ENCODE measurements at regions of chr19 and their contacts with region 1.

Region 1: DNA sequence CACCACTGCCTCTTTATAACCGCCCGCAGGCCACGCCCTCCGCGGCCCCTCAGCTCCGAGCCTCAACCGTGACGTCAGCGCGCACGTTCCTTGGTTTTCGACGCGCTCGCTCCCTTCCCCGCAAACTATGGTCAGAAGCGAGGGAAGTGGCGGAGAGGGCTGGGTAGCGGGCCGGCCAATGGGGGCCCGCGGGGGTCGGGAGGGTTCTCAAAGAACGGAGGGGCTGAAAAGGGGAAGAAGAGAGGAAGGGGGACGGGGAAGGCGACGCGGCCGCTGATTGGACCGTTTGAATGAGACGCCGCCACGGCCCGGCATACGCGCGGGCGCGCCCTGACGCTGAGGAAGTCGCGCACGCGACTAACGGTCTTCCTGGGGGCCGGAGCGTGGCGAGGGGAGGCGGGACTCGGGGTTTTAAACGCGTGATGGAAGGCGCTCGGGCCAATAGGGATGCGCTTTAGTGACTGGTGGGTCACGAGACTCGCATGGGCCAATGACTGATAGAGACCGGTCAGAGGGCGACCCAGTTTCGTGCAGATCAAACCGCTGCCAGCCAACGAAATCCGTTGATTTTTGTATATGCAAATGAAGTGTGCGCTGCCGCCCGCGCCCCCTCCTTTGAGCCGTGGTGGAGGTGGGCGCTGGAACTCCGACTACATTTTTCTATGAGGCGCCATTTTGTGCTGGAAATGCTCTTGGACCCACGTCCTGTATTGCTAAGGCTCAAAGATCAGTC is 378 bp upstream of the UBE2S start:
- DNase-seq: peak; percentile 96
- H3K4me3 Mint-ChIP-seq: peak overlapping the region; percentile 93
- H3K27ac Mint-ChIP-seq: peak overlapping the region; percentile 97
- H3K4me1 Mint-ChIP-seq: peaks cover 26% of the 10 kb centered on the region
- H3K27me3 Mint-ChIP-seq: peaks cover 6% of the 10 kb centered on the region

Region 2: DNA sequence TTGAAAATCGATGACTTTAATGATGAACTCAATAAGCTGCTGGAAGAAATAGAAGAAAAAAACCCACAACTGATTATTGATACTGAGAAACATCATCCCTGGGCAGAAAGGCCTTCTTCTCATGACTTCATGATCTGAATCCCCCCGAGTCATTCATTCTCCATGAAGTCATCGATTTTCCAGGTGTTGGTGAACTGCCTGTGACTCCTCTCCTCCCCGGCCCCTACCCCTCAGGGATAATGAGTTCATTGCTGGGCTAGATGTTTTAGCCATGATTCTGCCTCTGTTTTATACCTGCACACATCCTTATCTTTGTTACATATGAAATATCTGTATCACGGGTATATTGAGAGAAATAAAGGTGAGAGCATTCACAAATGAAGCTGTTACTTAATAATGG is 407.2 kb before region 1 on chr19:
- intact Hi-C with region 1: no loop called
- DNase-seq: no peak
- H3K4me3 Mint-ChIP-seq: no peak overlapping the region
- H3K27ac Mint-ChIP-seq: no peak overlapping the region
- H3K4me1 Mint-ChIP-seq: peaks cover 2% of the 10 kb centered on the region
- H3K27me3 Mint-ChIP-seq: no peaks in the 10 kb centered on the region

Region 3: GRCh38 chr19:55062734-55063492 is 345.1 kb before region 1 on chr19 and contains the start of gene RDH13:
- intact Hi-C with region 1: loop called (anchors 1 kb)
- DNase-seq: peak; percentile 96
- H3K4me3 Mint-ChIP-seq: peak within 1 kb of the TSS; percentile 89
- H3K27ac Mint-ChIP-seq: peak within 1 kb of the TSS; percentile 75
- H3K4me1 Mint-ChIP-seq: peaks cover 12% of the 10 kb centered on the region
- H3K27me3 Mint-ChIP-seq: peaks cover 18% of the 10 kb centered on the region
- total RNA-seq, gene RDH13: 21.7 and 26.4 TPM in 2 replicates

Region 4: GRCh38 chr19:55279770-55280643 is 128.0 kb before region 1 on chr19 and contains the start of gene HSPBP1:
- intact Hi-C with region 1: loop called (anchors 1 kb)
- DNase-seq: peak; percentile 95
- H3K4me3 Mint-ChIP-seq: peak within 1 kb of the TSS; percentile 99
- H3K27ac Mint-ChIP-seq: peak within 1 kb of the TSS; percentile 96
- H3K4me1 Mint-ChIP-seq: peaks cover 51% of the 10 kb centered on the region
- H3K27me3 Mint-ChIP-seq: peaks cover 7% of the 10 kb centered on the region
- total RNA-seq, gene HSPBP1: 66.4 and 69.6 TPM in 2 replicates

Region 5: GRCh38 chr19:55385740-55386529 is 22.0 kb before region 1 on chr19 and contains the start of gene RPL28:
- intact Hi-C with region 1: loop called (anchors 1 kb)
- DNase-seq: peak; percentile 99
- H3K4me3 Mint-ChIP-seq: peak within 1 kb of the TSS; percentile 99
- H3K27ac Mint-ChIP-seq: peak within 1 kb of the TSS; percentile 96
- H3K4me1 Mint-ChIP-seq: peaks cover 43% of the 10 kb centered on the region
- H3K27me3 Mint-ChIP-seq: no peaks in the 10 kb centered on the region
- total RNA-seq, gene RPL28: 1,835 and 1,847 TPM in 2 replicates

Region 6: DNA sequence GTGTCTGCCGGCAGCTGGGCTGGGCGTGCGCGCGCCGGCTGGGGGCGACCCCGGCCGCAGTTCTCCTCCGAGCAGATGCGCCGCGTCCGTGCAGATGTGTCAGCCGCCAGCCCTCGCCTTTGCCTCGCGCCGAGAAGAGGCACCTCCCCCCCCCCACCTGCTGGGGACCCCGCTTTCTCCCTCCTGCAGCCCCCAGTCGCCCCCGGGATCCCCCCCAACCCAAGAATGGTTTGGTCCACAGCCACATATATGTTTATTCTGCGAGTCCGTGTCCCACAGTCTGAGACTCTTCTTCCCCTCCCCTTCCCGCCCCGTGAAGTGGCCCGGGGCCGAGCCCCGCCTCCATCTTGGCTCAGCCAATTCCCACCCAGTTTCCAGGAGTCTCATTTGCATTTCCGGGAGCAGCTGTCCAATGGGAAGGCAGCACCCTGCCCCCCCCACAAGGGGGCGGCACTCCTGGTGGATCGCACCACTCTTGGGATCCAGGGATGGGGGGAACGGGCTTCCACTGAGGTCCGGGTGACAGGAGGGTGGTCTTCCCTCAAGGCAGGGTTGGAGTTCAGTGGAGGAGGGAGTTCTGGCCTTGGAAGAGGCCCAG is 44.9 kb after region 1 on chr19:
- intact Hi-C with region 1: no loop called
- DNase-seq: peak; percentile 22
- H3K4me3 Mint-ChIP-seq: no peak overlapping the region
- H3K27ac Mint-ChIP-seq: no peak overlapping the region
- H3K4me1 Mint-ChIP-seq: no peaks in the 10 kb centered on the region
- H3K27me3 Mint-ChIP-seq: peaks cover 28% of the 10 kb centered on the region

Region 7: GRCh38 chr19:55599468-55600279 is 191.7 kb after region 1 on chr19 and contains the start of gene FIZ1:
- intact Hi-C with region 1: loop called (anchors 1 kb)
- DNase-seq: peak; percentile 95
- H3K4me3 Mint-ChIP-seq: peak within 1 kb of the TSS; percentile 93
- H3K27ac Mint-ChIP-seq: peak within 1 kb of the TSS; percentile 98
- H3K4me1 Mint-ChIP-seq: peaks cover 28% of the 10 kb centered on the region
- H3K27me3 Mint-ChIP-seq: no peaks in the 10 kb centered on the region
- total RNA-seq, gene FIZ1: 24.2 and 24.7 TPM in 2 replicates